Activated T-helper 2 cell treated with anti-CD3 and anti-CD28 coated beads, Interferon-gamma antibody, Interleukin-2, Interleukin-4, amounts not matched to agents 10 μg/mL and 5 μg/mL and 100 μg/mL, durations not matched to agents 14 hours and 24 hours and 36 hours (primary cell): ENCODE measurements at regions of chr16 and their contacts with region 1.

Region 1: GRCh38 chr16:74296432-74297144 is at the start of gene PSMD7:
- DNase-seq: peak; percentile 87
- H3K4me3 Mint-ChIP-seq: peak within 1 kb of the TSS; percentile 84
- H3K27ac Mint-ChIP-seq: peak within 1 kb of the TSS; percentile 90
- H3K4me1 Mint-ChIP-seq: peaks cover 20% of the 10 kb centered on the region
- H3K27me3 Mint-ChIP-seq: no peaks in the 10 kb centered on the region
- total RNA-seq, gene PSMD7: 164 and 170 TPM in 2 replicates

Region 2: GRCh38 chr16:74309789-74310781 is 13.5 kb after region 1 on chr16:
- intact Hi-C with region 1: no loop called
- DNase-seq: no peak
- H3K4me3 Mint-ChIP-seq: no peak overlapping the region
- H3K27ac Mint-ChIP-seq: peak overlapping the region; percentile 28
- H3K4me1 Mint-ChIP-seq: peaks cover 4% of the 10 kb centered on the region
- H3K27me3 Mint-ChIP-seq: no peaks in the 10 kb centered on the region

Region 3: DNA sequence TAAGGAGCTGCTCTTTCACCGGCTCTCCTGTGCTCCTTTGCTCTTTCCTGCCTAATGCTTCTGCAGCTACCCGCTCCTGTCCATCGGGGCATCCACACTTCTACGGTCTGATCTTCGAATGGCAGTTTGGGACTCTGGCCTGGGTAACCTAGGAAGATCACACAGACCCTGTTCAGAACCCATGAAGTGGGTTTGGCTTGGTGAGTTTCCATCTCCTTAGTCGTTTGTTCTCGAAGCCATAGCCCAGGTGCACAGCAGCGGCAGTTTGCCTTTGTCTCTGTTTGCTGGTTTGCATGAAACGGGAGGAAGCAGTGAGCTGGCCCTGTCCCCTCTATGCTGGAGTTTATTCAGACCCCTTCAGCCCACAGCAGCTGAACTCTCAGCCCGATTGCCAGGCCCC is 29.1 kb after region 1 on chr16:
- intact Hi-C with region 1: loop called (anchors 2 kb)
- DNase-seq: no peak
- H3K4me3 Mint-ChIP-seq: no peak overlapping the region
- H3K27ac Mint-ChIP-seq: no peak overlapping the region
- H3K4me1 Mint-ChIP-seq: no peaks in the 10 kb centered on the region
- H3K27me3 Mint-ChIP-seq: no peaks in the 10 kb centered on the region

Region 4: DNA sequence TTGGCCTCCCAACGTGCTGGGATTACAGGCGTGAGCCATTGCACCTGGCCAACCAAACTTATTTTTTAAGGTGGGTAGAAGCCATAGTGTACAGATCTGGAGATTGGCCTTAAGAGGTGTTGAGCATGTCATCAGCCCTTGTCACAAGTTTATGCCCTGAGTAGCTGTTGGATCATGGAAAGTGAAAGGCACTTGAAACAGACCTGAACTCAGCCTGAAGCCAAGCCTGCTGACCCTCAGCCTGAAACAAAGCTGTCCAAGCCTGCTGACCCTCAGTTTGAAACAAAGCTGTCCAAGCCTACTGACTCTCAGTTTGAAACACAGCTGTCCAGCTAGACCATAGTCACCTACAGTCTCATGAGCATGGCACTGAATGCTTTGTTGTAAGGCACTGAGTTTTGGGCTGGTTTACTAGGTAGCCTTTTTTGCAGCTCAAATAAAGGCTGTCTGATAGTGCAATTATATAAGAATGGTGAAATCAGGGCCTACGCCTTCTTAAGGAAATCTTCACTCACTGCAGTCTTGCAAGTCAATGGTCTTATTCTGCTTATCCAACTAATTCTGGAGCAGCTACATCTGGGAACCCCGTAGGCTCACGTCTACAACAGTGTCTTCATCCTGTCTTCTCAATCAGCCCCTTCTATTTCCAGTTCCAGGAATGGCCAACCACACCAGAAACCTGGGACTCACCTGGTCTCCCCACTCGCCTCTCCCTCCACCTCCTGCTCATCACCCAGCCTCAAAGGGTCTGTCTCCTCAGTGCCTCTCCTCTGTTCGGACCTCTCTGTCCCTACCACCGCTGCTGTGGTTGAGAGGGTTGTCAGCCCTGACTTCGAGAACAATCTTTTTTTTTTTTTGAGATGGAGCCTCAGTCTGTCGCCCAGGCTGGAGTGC is 76.6 kb after region 1 on chr16:
- intact Hi-C with region 1: loop called (anchors 1 kb)
- DNase-seq: no peak
- H3K4me3 Mint-ChIP-seq: no peak overlapping the region
- H3K27ac Mint-ChIP-seq: no peak overlapping the region
- H3K4me1 Mint-ChIP-seq: peaks cover 2% of the 10 kb centered on the region
- H3K27me3 Mint-ChIP-seq: no peaks in the 10 kb centered on the region